ENCODE measurements at regions of chr6 and their contacts with region 1.

Region 1: DNA sequence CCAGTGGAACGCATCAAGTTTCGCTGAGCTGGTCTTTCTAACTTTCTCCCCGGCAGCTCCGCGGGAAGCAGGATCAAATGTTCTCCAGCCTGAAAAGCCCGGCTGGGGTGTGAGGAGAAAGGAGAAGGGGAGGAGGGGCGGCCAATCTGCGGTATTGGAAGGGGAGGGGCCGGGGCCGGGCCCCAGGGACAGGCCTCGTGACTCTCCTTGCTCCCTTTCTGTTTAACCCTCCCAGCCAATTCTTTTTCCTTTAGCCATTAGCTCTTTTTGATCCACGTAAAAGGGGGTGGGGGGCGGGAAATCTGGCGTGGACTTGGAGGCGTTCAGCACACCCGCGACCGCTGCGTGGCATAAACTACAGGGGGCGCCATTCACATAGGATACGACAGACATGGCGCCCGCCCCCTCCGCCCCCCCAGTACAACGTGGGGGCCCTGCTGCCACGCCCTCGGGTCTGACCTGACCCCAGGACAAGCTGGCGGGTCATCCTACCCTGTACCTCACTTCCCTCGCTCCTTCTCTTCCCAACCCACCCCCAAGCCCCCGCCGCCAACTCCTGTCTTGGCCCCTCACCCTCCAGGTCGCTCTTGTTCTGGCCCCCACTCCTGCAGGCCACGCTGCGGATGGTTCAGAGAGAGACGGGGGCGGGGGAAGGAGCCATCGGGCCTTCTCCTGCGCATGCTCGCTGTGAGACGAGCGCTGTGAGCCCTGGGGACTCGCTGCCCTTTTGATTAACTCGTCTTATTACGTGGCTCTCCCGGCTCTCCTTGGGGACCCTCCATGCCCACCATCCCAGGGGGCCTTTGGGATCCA is 7.8 kb upstream of the MDGA1 start:
- DNase-seq: no peak
- H3K4me3 ChIP-seq: peak overlapping the region; percentile 50
- H3K27ac ChIP-seq: peak overlapping the region; percentile 43
- H3K27me3 ChIP-seq: no peaks in the 10 kb centered on the region
- CTCF ChIP-seq: peak; percentile 69

Region 2: GRCh38 chr6:37691904-37692806 is 13.3 kb before region 1 on chr6:
- CTCF ChIA-PET with region 1: interaction called, 10 read pairs
- POLR2A ChIA-PET with region 1: no interaction called
- DNase-seq: no peak
- H3K4me3 ChIP-seq: no peak overlapping the region
- H3K27ac ChIP-seq: peak overlapping the region; percentile 65
- H3K27me3 ChIP-seq: peaks cover 3% of the 10 kb centered on the region
- CTCF ChIP-seq: peak; percentile 96

Region 3: DNA sequence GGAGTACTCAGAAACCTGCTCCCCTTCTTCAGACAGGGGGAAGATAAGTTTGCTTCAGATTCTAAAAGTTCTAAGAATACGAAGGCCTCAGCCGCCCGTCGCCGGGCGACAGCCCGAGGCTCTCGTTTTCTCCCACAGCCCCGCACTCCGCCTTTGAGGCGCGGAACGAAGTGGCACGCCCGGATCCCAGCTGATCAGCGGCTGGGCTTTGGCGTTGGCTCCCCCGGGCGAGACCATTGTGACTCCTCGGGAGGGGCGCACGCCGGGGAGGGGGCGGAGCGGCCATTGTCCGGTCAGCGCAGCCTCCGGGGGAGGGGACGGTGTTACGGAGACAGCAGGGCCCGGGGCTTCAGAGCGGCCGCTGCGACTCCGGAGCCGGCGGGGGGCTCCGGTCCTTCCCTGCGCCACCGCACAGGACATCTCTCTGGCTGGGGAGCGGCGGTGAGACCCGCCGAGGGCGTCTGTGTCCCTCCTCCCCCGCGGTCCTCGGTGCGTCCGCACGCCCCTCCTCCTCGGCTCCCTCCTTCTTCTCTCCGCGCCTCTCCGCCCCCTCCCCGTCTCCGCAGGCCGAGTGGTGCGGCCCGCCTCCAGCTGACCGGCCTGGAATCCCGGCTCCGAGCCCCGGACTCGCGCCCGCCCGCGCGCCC is 113.9 kb after region 1 on chr6 and contains the start of gene ZFAND3:
- CTCF ChIA-PET with region 1: no interaction called
- POLR2A ChIA-PET with region 1: interaction called, 11 read pairs
- DNase-seq: peak; percentile 95
- H3K4me3 ChIP-seq: peak within 1 kb of the TSS; percentile 88
- H3K27ac ChIP-seq: peak within 1 kb of the TSS; percentile 98
- H3K27me3 ChIP-seq: no peaks in the 10 kb centered on the region
- CTCF ChIP-seq: no peak
- polyA plus RNA-seq, gene ZFAND3: 15.5 and 29.5 TPM in 2 replicates

Region 4: DNA sequence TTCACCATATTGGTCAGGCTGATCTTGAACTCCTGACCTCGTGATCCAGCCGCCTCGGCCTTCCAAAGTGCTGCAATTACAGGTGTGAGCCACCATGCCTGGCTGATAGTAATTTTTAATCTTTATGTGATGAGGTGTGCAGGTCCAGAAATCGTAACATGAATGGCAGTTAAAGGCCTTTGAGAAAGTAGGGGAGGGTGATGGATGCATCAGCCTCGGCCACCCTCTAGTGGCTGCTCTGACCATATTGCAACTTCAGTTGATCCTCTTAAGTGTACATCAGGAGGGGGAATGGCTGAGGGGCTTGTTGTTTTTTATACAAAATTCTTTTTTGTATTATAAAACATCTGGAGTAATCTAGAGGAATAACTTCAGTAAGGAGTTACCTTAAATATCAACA is 307.1 kb after region 1 on chr6:
- CTCF ChIA-PET with region 1: interaction called, 12 read pairs
- POLR2A ChIA-PET with region 1: no interaction called
- DNase-seq: peak; percentile 27
- H3K4me3 ChIP-seq: no peak overlapping the region
- H3K27ac ChIP-seq: no peak overlapping the region
- H3K27me3 ChIP-seq: no peaks in the 10 kb centered on the region
- CTCF ChIP-seq: peak; percentile 80

Measured in AG04450 (cell line).